ENCODE measurements at regions of chr10 and their contacts with region 1.

Region 1: GRCh38 chr10:132360766-132361447 is 28.9 kb downstream of the LRRC27 start:
- DNase-seq: peak in 1 of 2 experiments; percentile 89
- H3K4me3 ChIP-seq: no peak overlapping the region
- H3K27ac ChIP-seq: no peak overlapping the region
- H3K4me1 ChIP-seq: no peaks in the 10 kb centered on the region
- H3K27me3 ChIP-seq: peaks cover 0 to 2% (median 0%) of the 10 kb centered on the region in 4 experiments; a peak in 1 of 7 replicates
- CTCF ChIP-seq: peak; percentile 79 to 98 (median 94)
- EP300 ChIP-seq: no peak
- POLR2A ChIP-seq: no peak
- RAD21 ChIP-seq: peak; percentile 63 to 72

Region 2: DNA sequence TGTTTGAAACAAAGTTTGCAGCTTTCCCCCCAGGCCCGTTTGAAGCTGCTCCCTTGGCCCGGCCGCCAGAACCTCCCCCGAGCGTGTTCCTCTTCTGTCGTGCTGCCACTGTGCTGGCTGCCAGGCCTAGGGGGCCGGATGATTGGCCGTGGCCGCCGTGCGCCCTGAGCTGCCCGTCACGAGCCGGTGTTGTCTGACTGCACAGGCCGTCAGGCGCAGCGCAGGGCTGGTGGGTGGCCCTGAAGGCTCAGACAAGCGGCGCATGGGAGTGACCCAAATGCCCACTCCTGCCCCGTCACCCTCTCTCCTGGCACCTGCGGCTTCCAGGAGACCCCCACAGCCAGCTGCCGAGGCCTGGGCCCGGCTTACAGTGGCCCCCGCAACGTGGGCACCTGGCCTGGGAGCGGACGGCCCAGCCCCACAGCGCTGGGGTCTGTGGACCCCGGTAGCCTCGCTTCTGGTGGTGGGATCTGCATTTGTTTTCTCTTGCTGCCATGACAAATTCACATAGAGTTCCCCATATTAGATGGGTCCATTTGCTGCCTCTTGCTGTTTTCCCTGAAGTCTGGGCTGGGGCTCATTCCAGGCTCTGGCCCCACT is 282.1 kb before region 1 on chr10:
- CTCF ChIA-PET with region 1: no interaction called
- POLR2A ChIA-PET with region 1: no interaction called
- DNase-seq: no peak
- H3K4me3 ChIP-seq: no peak overlapping the region
- H3K27ac ChIP-seq: no peak overlapping the region
- H3K4me1 ChIP-seq: peaks cover 0 to 3% (median 0%) of the 10 kb centered on the region in 4 experiments; a peak in 2 of 7 replicates
- H3K27me3 ChIP-seq: no peaks in the 10 kb centered on the region
- CTCF ChIP-seq: no peak
- EP300 ChIP-seq: no peak
- POLR2A ChIP-seq: no peak
- RAD21 ChIP-seq: no peak

Region 3: DNA sequence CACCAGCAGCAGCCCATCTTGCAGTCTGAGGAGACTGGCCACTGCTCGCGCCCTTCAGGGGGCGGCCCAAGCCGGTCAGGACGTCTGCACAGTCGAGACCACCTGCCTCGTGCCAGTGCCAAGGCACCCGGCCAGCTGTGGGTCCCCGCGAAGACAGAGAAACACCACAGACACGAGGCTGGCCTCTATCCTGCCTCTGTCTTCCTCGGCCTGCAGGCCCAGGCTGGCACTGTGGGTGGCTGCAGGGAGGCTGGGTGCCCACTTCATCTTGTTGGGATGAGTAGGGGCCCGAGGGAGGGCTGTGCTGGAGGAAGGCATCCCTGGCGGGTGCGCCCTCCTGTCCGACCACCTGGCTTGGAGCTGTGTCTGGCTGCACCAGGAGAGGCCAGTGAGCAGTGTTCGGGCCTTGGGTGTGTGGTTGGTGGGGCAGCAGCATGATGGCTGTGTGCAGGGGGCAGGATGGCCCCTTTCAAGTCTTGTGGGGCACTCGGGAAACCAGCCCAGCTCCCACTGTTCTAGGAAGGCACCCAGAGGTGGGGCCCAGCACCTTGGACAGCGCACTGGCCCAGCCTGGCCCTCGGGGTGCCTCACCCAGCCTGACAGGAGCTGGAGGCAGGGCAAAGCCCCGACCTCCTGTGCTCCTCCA is 166.9 kb before region 1 on chr10:
- CTCF ChIA-PET with region 1: interaction called, 12 read pairs
- POLR2A ChIA-PET with region 1: no interaction called
- DNase-seq: no peak
- H3K4me3 ChIP-seq: no peak overlapping the region
- H3K27ac ChIP-seq: no peak overlapping the region
- H3K4me1 ChIP-seq: no peaks in the 10 kb centered on the region
- H3K27me3 ChIP-seq: peaks cover 0 to 4% (median under 1%) of the 10 kb centered on the region in 4 experiments; a peak in 2 of 7 replicates
- CTCF ChIP-seq: no peak
- EP300 ChIP-seq: no peak
- POLR2A ChIP-seq: no peak
- RAD21 ChIP-seq: no peak

Region 4: DNA sequence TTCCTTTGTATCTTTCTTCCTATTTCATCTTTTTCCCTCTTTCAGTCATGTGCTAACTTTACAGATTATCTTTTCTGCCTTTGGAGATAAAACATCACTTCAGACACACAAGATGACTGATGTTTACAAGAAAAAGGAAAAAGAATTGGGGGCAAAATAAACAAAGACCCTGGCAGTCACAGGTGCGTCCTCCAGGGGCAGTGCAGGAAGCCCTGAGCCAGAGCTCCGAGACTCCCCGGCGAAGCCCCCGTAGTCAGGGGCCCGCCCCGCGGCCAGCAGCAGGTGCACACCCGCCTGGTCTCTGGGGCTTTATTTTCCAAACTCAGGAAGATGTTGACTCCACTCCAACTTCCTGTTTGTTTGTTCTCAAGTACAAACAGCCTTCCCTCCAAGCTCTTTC is 63.4 kb before region 1 on chr10:
- CTCF ChIA-PET with region 1: interaction called, 10 read pairs
- POLR2A ChIA-PET with region 1: interaction called, 3 read pairs
- DNase-seq: no peak
- H3K4me3 ChIP-seq: no peak overlapping the region
- H3K27ac ChIP-seq: no peak overlapping the region
- H3K4me1 ChIP-seq: peaks cover 0 to 15% (median 11%) of the 10 kb centered on the region in 4 experiments; a peak in 6 of 7 replicates
- H3K27me3 ChIP-seq: no peaks in the 10 kb centered on the region
- CTCF ChIP-seq: peak; percentile 27 to 45 (median 39); a peak in 3 of 4 replicates
- EP300 ChIP-seq: no peak
- POLR2A ChIP-seq: no peak
- RAD21 ChIP-seq: peak in 1 of 2 experiments; percentile 41; a peak in 1 of 4 replicates

Region 5: GRCh38 chr10:132347211-132347930 is 13.5 kb before region 1 on chr10:
- CTCF ChIA-PET with region 1: interaction called, 54 read pairs
- POLR2A ChIA-PET with region 1: no interaction called
- DNase-seq: no peak
- H3K4me3 ChIP-seq: no peak overlapping the region
- H3K27ac ChIP-seq: no peak overlapping the region
- H3K4me1 ChIP-seq: no peaks in the 10 kb centered on the region
- H3K27me3 ChIP-seq: peaks cover 0 to 2% (median 1%) of the 10 kb centered on the region in 4 experiments; a peak in 1 of 7 replicates
- CTCF ChIP-seq: no peak
- EP300 ChIP-seq: no peak
- POLR2A ChIP-seq: no peak
- RAD21 ChIP-seq: no peak

Region 6: DNA sequence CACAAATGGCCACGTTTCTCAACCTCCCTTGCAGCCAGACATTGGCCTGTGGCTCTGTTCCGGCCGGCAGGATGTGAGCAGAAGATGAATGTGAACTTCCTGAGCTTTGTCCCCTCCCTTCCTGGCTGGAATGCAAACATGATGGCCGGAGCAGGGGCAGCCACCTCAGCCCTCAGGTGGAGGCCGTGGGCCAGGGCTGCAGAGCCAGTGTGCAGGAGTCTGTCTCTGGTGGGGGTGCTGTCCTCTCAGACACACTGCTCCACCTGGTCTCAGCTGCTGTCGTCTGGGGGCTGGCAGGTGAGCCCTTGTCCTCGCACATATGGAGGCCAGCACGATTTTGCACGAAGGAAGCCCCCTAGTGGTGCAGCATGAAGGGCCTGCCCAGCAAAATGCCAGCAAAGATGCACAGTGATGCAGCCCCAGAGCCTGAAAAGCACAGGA is 10.8 kb after region 1 on chr10:
- CTCF ChIA-PET with region 1: interaction called, 48 read pairs
- POLR2A ChIA-PET with region 1: interaction called, 5 read pairs
- DNase-seq: peak in 1 of 2 experiments; percentile 66
- H3K4me3 ChIP-seq: no peak overlapping the region
- H3K27ac ChIP-seq: no peak overlapping the region
- H3K4me1 ChIP-seq: peaks cover 0 to 14% (median 3%) of the 10 kb centered on the region in 4 experiments; a peak in 4 of 7 replicates
- H3K27me3 ChIP-seq: no peaks in the 10 kb centered on the region; a peak in 1 of 7 replicates
- CTCF ChIP-seq: peak; percentile 59 to 68 (median 64)
- EP300 ChIP-seq: no peak
- POLR2A ChIP-seq: no peak
- RAD21 ChIP-seq: peak; percentile 27 to 47; a peak in 2 of 4 replicates

Region 7: GRCh38 chr10:132382231-132382922 is 21.5 kb after region 1 on chr10:
- CTCF ChIA-PET with region 1: interaction called, 13 read pairs
- POLR2A ChIA-PET with region 1: no interaction called
- DNase-seq: no peak
- H3K4me3 ChIP-seq: no peak overlapping the region
- H3K27ac ChIP-seq: no peak overlapping the region
- H3K4me1 ChIP-seq: no peaks in the 10 kb centered on the region
- H3K27me3 ChIP-seq: no peaks in the 10 kb centered on the region
- CTCF ChIP-seq: no peak
- EP300 ChIP-seq: no peak
- POLR2A ChIP-seq: no peak
- RAD21 ChIP-seq: no peak

Region 8: GRCh38 chr10:132452631-132453469 is 91.9 kb after region 1 on chr10:
- CTCF ChIA-PET with region 1: interaction called, 16 read pairs
- POLR2A ChIA-PET with region 1: interaction called, 3 read pairs
- DNase-seq: peak in 1 of 2 experiments; percentile 98
- H3K4me3 ChIP-seq: peak overlapping the region in 1 of 4 experiments; percentile 42; a peak in 3 of 8 replicates
- H3K27ac ChIP-seq: no peak overlapping the region
- H3K4me1 ChIP-seq: peaks cover 0 to 16% (median 12%) of the 10 kb centered on the region in 4 experiments; a peak in 6 of 7 replicates
- H3K27me3 ChIP-seq: peaks cover 0 to 2% (median 0%) of the 10 kb centered on the region in 4 experiments; a peak in 2 of 7 replicates
- CTCF ChIP-seq: peak in 2 of 3 experiments; percentile 72 to 96; a peak in 3 of 4 replicates
- EP300 ChIP-seq: 0 out of 3 replicates have a peak, but pooled peaks of 1 of the 2 experiments have one; percentile 40
- POLR2A ChIP-seq: no peak
- RAD21 ChIP-seq: peak; percentile 93 to 98

Measured in H1 (cell line).